ENCODE measurements at regions of chr6 and their contacts with region 1.

Region 1: GRCh38 chr6:39361657-39362486 is 39.4 kb upstream of the KCNK16 start:
- DNase-seq: peak; percentile 86
- H3K4me3 ChIP-seq: no peak overlapping the region
- H3K27ac ChIP-seq: no peak overlapping the region
- H3K4me1 ChIP-seq: peaks cover 12% of the 10 kb centered on the region
- H3K27me3 ChIP-seq: no peaks in the 10 kb centered on the region

Region 2: DNA sequence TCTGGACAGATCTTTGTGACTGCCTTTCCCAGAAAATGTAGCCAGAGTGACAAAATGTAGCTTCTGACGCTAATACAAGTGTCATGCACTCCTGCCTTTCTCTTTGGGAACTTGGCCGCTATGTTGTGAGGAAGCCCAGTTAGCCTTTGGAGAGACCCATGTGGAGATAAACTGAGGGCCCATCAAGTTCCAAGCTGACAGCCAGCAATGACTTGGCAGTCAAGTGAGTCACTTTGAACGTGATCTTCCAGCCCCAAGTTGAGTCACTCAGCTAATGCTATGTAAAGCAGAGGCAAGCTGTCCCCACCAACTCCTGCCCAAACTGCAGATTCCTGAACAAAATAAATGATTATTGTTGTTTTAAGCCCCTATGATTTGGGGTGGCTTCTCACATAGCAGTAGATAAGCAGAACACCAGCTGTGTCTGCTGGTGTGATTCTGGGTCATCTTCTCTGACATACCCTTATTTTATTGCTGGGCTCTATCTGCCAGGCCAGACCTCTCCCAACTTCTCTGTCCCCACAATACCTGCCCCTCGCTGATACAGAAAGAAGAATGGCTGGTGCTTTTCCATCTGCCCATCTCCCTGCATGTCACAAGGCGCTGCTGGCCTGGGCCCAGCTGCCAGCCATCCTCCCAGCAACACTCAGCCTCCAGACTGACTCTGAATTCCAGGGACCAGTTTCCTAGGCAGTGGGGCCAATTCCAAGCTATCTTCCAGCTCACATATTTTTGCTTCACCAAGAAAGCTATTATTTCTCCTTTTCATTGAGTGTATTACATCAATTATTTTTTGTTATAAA is 950.5 kb after region 1 on chr6:
- in situ Hi-C with region 1: loop called (anchors 10 kb)
- DNase-seq: peak; percentile 48
- H3K4me3 ChIP-seq: no peak overlapping the region
- H3K27ac ChIP-seq: no peak overlapping the region
- H3K4me1 ChIP-seq: no peaks in the 10 kb centered on the region
- H3K27me3 ChIP-seq: no peaks in the 10 kb centered on the region

Region 3: GRCh38 chr6:40845553-40845952 is 1483.7 kb after region 1 on chr6:
- in situ Hi-C with region 1: loop called (anchors 25 kb)
- DNase-seq: peak; percentile 55
- H3K4me3 ChIP-seq: no peak overlapping the region
- H3K27ac ChIP-seq: no peak overlapping the region
- H3K4me1 ChIP-seq: 0 out of 2 replicates have a peak, but pooled peaks cover 3% of the 10 kb centered on the region
- H3K27me3 ChIP-seq: peaks cover 29% of the 10 kb centered on the region

Region 4: DNA sequence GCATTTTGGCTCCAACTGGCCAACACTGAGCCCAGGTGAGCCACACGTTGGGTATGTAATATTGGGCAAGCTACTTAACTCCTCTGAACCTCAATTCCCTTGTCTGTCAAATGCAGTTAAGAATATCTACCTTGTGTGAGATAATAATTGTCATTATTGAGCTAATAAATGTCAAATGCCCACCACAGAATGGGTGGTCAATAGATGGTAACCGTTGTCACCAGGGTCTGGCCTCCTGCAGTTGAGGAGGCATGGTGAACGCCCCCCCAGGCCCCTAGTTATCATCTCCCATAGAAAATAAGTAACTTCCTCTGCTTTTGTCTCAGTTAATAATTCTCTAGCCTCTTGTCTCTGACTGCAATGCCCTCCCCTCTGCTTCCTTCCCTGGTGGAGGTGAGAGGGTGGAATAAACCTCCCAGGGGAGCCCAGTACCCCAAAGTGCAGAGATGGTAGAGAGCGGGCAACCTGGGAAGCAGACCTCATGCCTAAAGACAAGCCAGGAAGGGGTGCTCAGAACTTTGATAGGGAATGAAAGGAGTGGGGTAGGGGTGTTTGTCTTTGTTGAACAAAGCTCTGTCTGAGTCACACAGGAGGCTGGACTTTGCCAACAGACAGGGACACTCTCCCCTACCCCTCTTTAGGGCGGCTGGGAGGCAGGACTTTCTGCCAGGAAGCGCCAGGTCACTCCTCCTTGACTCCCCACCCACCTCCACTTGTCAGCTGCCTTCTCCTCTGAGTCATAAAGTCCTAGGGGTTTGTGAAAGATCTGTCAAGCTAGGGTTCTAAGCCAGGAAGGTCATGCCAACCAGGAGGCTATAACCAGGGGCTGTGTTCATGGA is 1678.4 kb after region 1 on chr6:
- in situ Hi-C with region 1: loop called (anchors 10 kb)
- DNase-seq: peak; percentile 38
- H3K4me3 ChIP-seq: no peak overlapping the region
- H3K27ac ChIP-seq: no peak overlapping the region
- H3K4me1 ChIP-seq: no peaks in the 10 kb centered on the region
- H3K27me3 ChIP-seq: peaks cover 4% of the 10 kb centered on the region